Panc1 (cell line): ENCODE measurements at regions of chr2 and their contacts with region 1.

Region 1: DNA sequence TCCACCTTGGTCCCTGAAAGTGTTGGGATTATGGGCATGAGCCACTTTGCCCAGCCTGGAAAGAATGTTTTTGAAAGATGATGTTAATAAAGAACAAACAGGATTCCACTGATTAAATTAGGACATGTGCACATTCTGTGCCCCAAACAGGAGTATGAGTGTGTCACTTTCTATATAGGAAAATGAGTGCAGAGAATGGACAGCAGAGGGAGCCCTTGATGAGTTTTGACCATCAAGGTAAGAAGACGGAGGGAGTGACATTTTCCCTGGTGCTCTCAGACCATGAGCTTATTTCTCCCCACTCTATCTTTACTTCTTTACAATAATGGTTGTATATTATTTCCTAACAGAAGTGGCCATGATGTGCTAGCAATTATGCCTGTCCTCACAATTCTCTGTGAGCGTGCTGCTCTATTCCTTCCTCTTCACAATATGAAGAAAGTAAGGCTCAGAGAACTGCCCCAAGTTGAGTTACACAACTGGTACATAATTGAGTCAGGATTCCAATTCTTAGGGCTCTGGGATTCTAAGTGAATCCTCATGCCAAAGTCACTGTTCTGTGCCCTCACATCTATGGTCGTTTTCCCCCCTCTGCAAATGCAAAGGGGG is 20.6 kb downstream of the RPL37A start:
- DNase-seq: no peak
- ATAC-seq: peak; percentile 87
- H3K4me3 ChIP-seq: no peak overlapping the region
- H3K27ac ChIP-seq: no peak overlapping the region
- H3K4me1 ChIP-seq: no peaks in the 10 kb centered on the region
- H3K27me3 ChIP-seq: no peaks in the 10 kb centered on the region
- CTCF ChIP-seq: peak; percentile 79

Region 2: DNA sequence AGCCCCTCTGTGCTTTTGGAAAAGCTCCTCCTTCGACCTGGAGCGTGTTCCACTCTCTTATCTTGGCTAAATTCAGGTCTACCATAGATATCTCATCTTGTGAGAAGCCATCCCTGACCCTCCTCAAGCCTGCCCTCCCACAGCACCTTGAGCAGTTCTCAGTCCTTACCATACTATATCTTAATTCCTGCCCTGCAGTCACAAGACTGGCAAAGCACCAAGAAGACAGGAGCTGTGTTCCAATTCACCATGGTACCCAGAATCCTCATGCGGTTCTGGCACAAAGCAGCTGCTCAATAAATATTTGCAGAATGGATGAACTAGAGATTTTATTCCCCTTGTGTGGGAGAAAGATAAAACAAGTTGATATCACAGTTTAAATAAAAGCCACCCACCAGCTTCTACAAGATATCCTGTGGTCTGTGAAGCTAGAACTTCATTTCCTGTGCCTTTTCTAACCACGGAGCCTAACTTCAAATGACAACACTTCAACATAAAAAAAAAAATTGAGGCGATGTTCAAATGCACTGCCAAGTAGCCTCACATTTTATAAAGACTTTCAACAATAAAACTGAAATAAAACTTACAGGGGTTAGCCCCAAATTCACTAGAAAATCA is 166.5 kb before region 1 on chr2:
- CTCF ChIA-PET with region 1: no interaction called
- POLR2A ChIA-PET with region 1: no interaction called
- in situ Hi-C with region 1: no loop called
- intact Hi-C with region 1: no loop called
- DNase-seq: no peak
- ATAC-seq: no peak
- H3K4me3 ChIP-seq: no peak overlapping the region
- H3K27ac ChIP-seq: no peak overlapping the region
- H3K4me1 ChIP-seq: no peaks in the 10 kb centered on the region
- H3K27me3 ChIP-seq: no peaks in the 10 kb centered on the region; the same call in 1 of the 2 replicates
- CTCF ChIP-seq: no peak

Region 3: GRCh38 chr2:216551234-216551633 is 32.0 kb after region 1 on chr2:
- CTCF ChIA-PET with region 1: no interaction called
- POLR2A ChIA-PET with region 1: no interaction called
- in situ Hi-C with region 1: no loop called
- intact Hi-C with region 1: no loop called
- DNase-seq: no peak
- ATAC-seq: no peak
- H3K4me3 ChIP-seq: no peak overlapping the region
- H3K27ac ChIP-seq: no peak overlapping the region
- H3K4me1 ChIP-seq: no peaks in the 10 kb centered on the region
- H3K27me3 ChIP-seq: no peaks in the 10 kb centered on the region
- CTCF ChIP-seq: no peak

Region 4: DNA sequence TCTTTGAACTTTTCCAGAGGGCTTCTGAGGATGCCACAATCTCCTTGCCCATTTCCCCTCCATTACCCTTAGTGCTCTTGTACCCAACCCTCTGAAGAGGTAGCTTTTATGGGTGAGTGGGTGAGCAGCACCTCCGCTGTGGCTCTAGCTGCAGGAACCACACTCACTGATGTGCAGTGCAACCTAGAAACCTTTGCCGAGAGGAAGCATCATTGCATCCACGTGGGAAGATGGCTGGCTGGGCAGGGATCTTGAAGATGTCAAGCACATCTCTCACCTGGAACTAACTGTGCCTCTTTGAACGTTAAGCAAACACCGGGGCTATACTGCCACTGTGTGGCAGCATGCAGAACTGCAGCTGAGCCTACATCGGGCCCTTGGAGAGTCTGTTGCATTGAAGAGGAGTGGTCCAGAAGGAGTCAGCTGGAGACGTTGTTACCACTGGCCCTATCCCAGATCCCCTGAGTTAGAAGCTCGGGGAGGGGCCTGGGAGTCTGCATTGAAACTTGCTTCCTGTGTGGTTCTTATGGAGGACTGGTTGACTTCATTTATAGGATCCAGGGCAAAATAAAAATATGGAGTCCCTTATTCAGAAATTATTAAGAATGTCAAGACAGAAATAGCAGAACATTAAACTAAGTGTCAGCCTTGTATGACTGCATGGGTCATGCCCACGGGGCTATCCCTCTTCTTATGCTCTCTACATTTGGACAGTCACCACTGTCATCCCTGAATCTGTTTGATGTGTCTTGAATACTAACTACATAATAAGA is 147.4 kb after region 1 on chr2:
- CTCF ChIA-PET with region 1: interaction called, 6 read pairs
- POLR2A ChIA-PET with region 1: no interaction called
- in situ Hi-C with region 1: no loop called
- intact Hi-C with region 1: loop called (anchors 1 kb)
- DNase-seq: peak; percentile 68
- ATAC-seq: peak; percentile 87
- H3K4me3 ChIP-seq: no peak overlapping the region
- H3K27ac ChIP-seq: no peak overlapping the region
- H3K4me1 ChIP-seq: no peaks in the 10 kb centered on the region
- H3K27me3 ChIP-seq: no peaks in the 10 kb centered on the region
- CTCF ChIP-seq: peak; percentile 94

Region 5: DNA sequence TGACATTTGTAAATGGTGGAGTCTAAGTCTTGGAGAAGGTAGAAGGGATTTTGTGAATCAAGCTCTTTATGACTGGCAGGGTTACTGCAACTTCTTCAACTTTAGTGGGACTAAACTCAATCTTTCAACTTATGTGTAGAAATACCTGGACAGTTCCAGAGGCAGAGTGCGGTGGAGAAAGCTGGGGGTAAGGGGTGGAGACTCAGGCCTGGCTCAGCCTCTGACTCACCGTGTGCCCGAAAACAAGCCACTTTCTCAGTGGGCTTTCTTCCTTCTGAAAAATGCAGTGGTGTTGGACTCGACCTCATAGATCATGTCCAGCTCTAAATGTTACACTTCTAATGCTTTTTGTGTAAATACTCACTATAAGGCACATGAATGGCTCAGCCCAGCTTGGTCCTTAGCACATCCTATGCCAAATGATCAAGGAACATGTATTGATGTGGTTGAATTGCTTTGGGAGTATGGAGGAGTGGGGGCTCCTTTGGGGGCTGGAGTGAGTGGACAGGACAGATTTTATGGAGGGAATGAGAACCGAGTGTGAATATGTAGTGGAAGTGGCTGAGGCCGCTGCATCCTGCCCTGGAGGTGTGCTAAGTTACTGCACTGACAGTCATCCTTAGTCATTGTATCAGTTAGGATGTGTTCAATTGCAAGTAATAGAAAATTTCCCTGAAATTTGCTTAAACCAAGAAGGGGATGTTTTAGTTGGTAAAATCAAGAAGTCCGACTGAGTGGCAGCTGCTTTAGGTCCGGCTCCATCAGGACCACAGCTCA is 208.3 kb after region 1 on chr2:
- CTCF ChIA-PET with region 1: no interaction called
- POLR2A ChIA-PET with region 1: no interaction called
- in situ Hi-C with region 1: no loop called
- intact Hi-C with region 1: no loop called
- DNase-seq: no peak
- ATAC-seq: no peak
- H3K4me3 ChIP-seq: no peak overlapping the region
- H3K27ac ChIP-seq: no peak overlapping the region
- H3K4me1 ChIP-seq: no peaks in the 10 kb centered on the region
- H3K27me3 ChIP-seq: no peaks in the 10 kb centered on the region; the same call in 1 of the 2 replicates
- CTCF ChIP-seq: no peak